Head of caudate nucleus (tissue), 42 donors: ENCODE measurements at regions of chr3 and their contacts with region 1.

Region 1: DNA sequence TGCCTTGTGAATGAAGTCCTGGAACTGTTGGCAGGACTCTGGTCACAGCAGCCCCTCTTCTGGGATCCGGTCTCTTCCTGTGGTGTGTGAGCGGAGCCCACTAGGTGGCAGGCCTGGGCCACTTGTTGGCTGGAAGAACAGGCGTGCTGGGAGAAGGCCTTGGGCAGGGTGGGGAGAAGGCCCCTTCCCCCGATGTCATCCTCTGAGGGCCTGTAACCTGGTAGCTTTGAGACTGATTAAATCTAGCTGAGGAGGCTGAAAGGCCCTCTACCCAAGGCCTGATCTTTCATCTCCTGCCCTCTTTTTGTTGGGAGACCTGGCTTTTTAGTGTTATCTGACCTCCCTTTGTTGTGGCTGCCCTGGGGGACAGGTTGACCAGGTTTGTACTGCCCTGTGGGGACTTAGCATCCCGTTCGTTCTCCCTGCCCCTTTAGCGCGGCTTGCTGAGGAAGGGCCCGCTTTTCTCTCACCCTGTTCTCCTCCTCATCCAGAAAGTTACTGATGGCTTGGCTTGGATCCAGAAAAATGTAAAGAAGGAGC is 48.3 kb downstream of the CHCHD6 start:
- DNase-seq: peak; percentile 69 to 92 (median 82)

Region 2: DNA sequence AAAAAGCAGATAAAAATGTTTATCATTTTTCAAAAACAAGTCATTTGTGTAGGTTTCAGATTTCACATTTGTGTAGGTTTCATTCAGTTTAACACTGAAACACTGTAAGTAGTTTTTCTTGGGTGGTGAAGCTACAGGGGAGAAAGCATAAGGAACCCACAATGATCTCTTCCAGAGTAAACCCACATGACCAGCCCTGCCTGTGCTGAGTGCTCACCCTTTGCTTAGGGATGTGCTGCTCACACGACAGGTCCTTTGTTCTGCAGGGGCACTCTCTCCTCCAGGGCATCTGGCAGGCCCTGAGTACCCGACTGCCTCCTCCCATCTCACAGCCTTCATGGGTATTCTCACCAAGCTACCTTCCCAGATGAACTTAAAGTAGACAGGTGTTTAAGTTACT is 305.6 kb before region 1 on chr3:
- intact Hi-C with region 1: no loop called
- DNase-seq: peak in 6 of 42 donors; percentile 3 to 63 (median 24)

Region 3: DNA sequence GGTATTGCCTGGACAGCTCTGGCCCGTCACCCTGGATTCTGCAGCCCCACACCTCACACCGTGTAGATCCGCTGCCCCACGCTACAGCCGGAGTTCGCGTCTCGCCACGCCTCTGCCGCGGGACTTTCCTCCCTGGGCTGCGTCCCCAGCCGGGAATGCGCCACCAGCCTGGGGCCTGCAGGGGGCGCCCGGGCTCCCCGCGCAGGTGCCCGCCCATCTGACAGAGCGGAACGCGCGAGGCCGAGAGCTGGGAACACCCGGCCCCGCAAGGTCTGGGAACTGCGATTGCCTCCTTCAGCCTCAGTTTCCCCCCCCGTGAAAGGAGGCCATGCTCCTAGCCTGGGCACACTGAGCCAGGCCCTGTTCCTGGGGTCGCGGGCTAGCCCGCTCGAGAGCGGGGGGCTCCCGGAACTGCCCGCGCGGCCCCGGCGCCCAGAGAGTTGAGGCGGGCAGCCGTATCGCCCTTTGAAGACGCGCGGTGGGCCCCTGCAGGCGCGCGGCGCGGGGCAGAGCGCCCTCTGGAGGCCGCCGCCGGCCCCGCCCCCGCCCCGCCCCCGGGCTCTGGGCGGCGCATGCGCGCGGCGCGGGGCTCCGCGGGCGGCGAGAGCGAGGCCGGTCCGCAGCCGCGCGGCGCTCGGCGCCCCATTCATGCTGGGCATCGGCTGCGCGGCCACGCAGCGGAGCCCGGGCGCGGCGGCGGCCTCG is 230.2 kb after region 1 on chr3 and contains the start of gene PLXNA1:
- intact Hi-C with region 1: loop called (anchors 2 kb)
- DNase-seq: peak in 41 of 42 donors; percentile 45 to 86 (median 69)

Region 4: DNA sequence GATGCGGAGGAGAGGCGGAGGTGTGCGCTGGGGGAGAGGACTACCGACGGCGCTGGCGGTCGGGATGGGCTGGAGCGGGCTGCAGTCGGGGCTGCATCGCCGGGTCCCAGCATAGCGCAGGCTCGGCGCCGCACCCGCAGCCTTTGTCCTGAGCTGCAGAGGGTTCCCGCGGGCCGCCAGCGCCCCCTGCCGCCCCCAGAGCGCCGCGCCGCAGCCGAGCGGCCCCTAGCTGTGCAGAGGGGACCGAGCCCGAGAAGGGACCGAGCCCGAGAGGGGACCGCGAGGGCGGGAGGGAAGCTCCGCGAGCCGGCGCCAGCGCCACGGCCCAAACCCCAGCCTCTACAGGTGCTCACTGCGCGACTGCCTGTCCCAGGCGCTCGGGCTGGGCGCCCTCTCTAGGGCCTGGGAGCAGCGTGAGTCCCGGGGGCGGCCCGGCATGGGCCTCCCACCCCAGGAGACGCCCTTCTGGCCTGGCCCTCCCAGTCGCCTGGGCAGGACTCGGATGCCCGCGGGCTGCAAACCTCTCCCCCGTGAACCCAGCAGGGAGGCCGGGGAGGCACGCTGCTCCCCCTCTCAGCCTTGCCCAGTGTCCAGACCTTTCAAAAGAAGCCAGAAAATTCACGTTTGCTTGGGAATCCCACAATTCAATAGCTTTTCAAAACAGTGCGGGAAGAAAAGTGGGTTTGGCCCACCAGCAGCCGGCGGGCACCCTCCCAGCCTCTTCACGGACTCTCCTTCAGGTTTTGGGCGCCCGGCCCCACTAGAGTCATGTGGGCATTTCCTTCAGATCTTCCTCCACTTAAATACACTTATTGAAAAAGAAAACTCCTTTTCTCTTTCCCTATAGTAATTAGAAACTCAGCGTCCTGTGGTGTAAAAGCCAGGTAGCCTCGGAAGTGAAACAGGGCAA is 703.4 kb after region 1 on chr3:
- intact Hi-C with region 1: loop called (anchors 5 kb)
- DNase-seq: peak; percentile 43 to 90 (median 78)